ENCODE measurements at regions of chr15 and their contacts with region 1.

Region 1: DNA sequence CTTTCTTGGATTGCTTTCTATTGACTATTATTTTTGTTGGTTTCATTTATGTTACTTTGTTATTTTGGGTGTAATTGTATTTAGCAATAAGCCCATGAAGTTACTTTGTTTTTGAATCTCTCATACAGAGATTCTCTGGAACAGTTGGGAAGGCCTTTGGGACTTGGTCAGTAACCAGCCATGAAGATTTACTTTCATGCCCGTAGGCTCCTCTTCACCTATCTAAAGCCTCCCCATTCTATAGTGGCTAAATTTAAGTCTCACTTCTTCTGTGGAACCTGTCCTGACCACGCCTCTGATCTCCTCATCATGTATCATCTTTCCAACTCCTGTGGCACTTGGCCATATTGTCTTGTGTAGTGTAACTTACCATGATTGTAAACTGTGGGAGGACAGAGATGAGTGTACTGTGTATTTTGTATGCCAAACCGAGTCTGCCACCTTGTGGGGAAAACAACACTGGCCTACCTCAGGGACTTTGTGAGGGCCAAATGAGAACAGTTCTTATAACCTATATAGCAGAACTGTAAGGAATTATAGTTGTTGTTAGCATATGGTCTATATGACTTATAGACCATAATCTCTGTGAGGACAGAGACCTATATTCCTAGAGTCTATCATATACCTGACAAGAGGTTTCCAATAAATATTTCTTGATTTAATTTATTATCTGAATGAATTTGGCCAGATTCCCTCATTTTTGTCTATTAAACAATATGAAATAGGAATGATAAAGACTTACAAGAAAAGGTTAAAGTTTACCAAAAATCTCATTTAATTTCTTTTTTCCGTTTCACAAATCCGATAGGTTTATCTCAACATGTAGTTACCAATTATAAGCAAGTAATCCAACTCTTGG is 75.0 kb downstream of the STARD9 start:
- DNase-seq: peak; percentile 55 to 68
- H3K4me3 ChIP-seq: no peak overlapping the region
- H3K4me3 Mint-ChIP-seq: no peak overlapping the region
- H3K27ac Mint-ChIP-seq: no peak overlapping the region
- H3K4me1 ChIP-seq: no peaks in the 10 kb centered on the region
- H3K4me1 Mint-ChIP-seq: no peaks in the 10 kb centered on the region
- H3K27me3 ChIP-seq: no peaks in the 10 kb centered on the region
- H3K27me3 Mint-ChIP-seq: peaks cover 9% of the 10 kb centered on the region
- CTCF ChIP-seq: peak; percentile 72 to 81

Region 2: DNA sequence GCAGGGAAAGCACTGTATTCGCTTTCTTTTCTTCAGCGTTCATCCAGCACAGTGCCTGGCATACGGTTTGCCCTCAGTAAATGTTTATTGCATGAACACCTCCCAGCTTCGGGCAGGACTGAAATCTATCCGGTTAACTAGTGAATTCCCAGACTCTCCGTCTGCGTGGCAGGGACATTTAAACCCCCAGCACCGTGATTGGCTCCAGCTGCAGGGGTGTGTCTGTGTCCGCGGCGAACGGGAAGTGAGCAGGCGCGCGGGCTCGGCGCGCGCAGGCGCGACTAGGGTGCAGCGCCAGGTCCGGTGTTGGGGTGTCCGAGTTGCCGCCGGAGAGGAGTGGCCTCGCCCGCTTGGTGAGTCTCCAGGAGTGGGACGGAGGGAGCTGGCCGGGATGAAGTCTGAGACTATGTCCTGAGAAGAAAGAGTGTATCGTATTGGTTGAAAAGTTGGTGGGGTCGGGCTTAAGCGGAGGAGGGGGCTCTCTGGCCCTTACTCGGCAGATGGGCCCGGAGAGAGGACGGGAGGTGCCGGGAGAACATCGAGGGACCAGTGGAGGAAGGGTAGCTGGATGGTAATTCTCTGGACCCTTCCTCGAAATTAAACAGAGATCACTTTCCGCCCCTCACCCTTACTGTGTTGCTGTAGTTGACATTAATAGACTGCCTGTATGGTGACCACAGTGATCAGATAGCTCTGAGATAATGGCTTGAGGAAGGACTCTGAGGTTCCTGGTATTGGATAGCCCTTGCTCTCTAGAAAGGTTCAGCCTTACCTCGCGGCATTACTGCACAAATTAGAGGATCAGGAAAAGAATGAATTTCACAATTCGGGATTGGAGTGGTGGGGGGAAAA is 154.8 kb before region 1 on chr15 and contains the start of gene SNAP23:
- CTCF ChIA-PET with region 1: no interaction called
- POLR2A ChIA-PET with region 1: no interaction called
- intact Hi-C with region 1: loop called (anchors 10 kb)
- DNase-seq: peak; percentile 92 to 93
- H3K4me3 ChIP-seq: peak within 1 kb of the TSS; percentile 56
- H3K4me3 Mint-ChIP-seq: peak within 1 kb of the TSS; percentile 84
- H3K27ac Mint-ChIP-seq: peak within 1 kb of the TSS; percentile 72
- H3K4me1 ChIP-seq: peaks cover 42% of the 10 kb centered on the region
- H3K4me1 Mint-ChIP-seq: peaks cover 42% of the 10 kb centered on the region
- H3K27me3 ChIP-seq: no peaks in the 10 kb centered on the region
- H3K27me3 Mint-ChIP-seq: no peaks in the 10 kb centered on the region
- CTCF ChIP-seq: no peak
- total RNA-seq, gene SNAP23: 92.2 and 97.5 TPM in 2 replicates

Region 3: GRCh38 chr15:42575188-42576039 is 75.0 kb before region 1 on chr15 and contains the start of gene STARD9:
- CTCF ChIA-PET with region 1: no interaction called
- POLR2A ChIA-PET with region 1: no interaction called
- intact Hi-C with region 1: loop called (anchors 1 kb)
- DNase-seq: peak; percentile 98
- H3K4me3 ChIP-seq: peak within 1 kb of the TSS; percentile 58
- H3K4me3 Mint-ChIP-seq: peak within 1 kb of the TSS; percentile 86
- H3K27ac Mint-ChIP-seq: peak within 1 kb of the TSS; percentile 37
- H3K4me1 ChIP-seq: 0 out of 2 replicates have a peak, but pooled peaks cover 10% of the 10 kb centered on the region
- H3K4me1 Mint-ChIP-seq: no peaks in the 10 kb centered on the region
- H3K27me3 ChIP-seq: peaks cover 1% of the 10 kb centered on the region; the same call in 1 of the 2 replicates
- H3K27me3 Mint-ChIP-seq: peaks cover 20% of the 10 kb centered on the region
- CTCF ChIP-seq: no peak
- total RNA-seq, gene STARD9: 0.56 and 0.86 TPM in 2 replicates

Region 4: DNA sequence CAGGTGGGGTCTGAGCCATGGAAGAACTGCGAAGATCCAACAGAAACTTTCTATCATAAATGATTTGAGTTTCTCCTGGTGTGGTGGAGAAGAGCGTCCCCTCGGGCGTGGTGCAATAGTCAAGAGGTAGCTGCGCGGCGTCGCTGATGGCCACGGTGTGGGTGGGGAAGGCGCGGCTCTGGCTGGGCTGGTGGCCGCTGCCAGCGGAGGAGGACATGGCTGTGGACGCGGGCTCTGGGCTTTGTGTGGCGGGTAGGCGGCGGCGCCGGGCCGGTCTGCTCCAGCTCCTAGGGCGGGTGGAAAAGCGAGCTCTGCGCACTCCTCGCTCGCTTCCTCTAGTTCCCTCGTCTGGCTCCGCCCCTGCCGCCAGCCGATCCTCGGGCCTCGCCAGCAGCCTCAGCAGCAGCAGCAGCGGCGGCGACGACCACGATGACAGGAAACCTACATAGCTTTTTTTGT is 69.1 kb before region 1 on chr15:
- CTCF ChIA-PET with region 1: interaction called, 3 read pairs
- POLR2A ChIA-PET with region 1: no interaction called
- intact Hi-C with region 1: loop called (anchors 1 kb)
- DNase-seq: peak; percentile 78 to 79
- H3K4me3 ChIP-seq: peak overlapping the region; percentile 31
- H3K4me3 Mint-ChIP-seq: peak overlapping the region; percentile 73
- H3K27ac Mint-ChIP-seq: no peak overlapping the region
- H3K4me1 ChIP-seq: 0 out of 2 replicates have a peak, but pooled peaks cover 7% of the 10 kb centered on the region
- H3K4me1 Mint-ChIP-seq: peaks cover 7% of the 10 kb centered on the region
- H3K27me3 ChIP-seq: no peaks in the 10 kb centered on the region
- H3K27me3 Mint-ChIP-seq: peaks cover 34% of the 10 kb centered on the region
- CTCF ChIP-seq: no peak

Region 5: DNA sequence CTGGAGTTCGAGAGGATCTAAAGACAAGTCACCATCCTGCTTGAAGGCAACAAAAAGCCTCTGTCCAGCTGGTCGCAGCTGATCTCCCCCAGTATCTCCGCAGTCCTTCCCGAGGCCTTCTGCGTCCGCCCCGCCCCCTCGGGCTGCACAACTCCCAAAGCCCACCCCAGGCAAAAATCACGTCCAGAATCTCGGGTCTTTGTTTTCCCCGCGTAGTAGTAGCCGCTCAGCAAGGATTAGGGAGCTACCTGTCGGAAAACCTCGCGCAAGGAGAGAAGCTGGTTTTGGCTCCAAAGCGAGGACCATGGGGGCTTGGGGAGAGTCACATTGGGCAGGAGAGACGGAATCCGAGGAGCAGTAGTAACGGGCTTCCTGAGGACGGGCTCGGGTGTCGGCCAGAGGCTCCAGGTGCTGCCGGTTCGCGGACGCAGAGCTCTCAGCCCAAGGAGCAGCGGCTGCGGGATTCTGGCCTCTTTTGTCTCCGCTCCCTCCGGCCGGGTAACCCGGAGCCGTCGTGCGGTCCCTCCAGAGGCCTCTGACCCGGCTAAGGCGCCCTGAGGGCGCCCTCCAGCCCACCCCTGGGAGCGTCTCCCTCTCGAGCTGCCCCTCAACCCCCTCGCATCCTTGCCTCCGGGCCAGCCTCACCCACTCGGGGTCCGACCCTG is 720.0 kb after region 1 on chr15:
- CTCF ChIA-PET with region 1: no interaction called
- POLR2A ChIA-PET with region 1: no interaction called
- intact Hi-C with region 1: no loop called
- DNase-seq: peak; percentile 27 to 38
- H3K4me3 ChIP-seq: peak overlapping the region; percentile 77
- H3K4me3 Mint-ChIP-seq: peak overlapping the region; percentile 93
- H3K27ac Mint-ChIP-seq: peak overlapping the region; percentile 93
- H3K4me1 ChIP-seq: peaks cover 10% of the 10 kb centered on the region
- H3K4me1 Mint-ChIP-seq: peaks cover 14% of the 10 kb centered on the region
- H3K27me3 ChIP-seq: no peaks in the 10 kb centered on the region
- H3K27me3 Mint-ChIP-seq: no peaks in the 10 kb centered on the region
- CTCF ChIP-seq: no peak